Mammary epithelial cell (primary cell): ENCODE measurements at regions of chr4 and their contacts with region 1.

Region 1: DNA sequence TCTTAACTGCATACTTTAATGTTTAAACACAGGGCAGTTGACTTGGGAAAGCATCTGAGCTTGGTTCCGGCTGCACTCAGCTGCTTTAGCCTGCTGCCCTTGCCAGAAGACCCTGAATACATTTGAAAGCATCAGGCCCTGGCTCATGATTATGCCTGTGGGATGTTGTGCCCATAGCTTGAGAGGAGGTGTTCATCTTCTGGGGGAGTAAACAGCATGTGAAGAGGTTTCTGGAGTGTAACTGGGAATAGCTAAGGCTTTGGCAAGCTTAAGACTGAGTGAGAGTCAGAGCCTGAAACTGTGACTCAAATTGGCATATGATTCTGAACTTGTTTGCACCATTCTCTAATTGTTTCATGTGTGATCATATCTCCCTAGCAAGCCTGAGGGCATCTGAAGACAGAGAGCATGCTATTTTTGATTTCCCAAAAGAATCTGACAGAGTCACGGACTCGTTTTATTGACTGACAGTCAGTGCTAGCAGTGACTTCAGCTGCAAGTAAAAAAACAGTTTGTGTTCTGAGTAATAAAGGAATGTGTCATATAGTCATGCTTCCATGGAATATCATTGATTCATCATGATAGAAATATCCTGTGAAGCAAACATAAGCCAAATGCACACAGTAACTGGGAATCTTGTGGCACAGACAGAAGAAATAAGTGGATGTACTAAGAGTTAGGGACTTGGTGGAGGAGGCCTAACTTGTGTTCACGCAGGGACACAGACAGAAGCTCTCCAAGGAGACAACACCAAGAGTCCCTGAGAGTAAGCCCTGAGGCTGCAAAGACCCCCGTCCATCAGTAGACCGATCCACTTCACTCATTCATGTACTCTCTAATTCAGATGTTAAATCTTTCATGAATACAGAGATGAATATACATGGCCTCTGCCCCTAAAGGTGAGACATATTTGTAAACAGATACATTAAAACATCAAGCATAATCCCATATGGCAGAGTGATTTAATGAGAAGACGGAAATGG is 100.7 kb downstream of the SYNPO2 start:
- DNase-seq: peak; percentile 99
- H3K4me3 ChIP-seq: no peak overlapping the region
- H3K27ac ChIP-seq: peak overlapping the region; percentile 95
- H3K4me1 ChIP-seq: peaks cover 21% of the 10 kb centered on the region
- H3K27me3 ChIP-seq: no peaks in the 10 kb centered on the region
- CTCF ChIP-seq: no peak

Region 2: DNA sequence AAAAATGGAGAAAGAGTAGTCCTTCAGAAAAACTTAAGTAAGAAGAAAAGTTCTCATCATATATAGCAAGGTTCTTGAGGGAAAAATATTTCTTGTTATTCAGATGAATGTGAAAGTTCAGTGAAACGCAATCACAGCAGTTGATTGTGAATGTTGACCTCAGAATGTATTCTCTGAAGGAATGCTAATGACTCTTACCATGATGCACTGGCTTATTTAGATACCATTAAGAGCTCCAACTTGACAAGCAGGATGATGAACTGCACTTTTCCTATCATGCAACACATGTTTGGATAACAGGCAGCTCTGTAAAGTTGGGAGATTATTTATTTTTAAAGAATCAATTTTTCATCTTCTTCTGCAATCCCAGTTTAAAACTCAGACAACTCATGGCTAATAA is 30.8 kb after region 1 on chr4:
- CTCF ChIA-PET with region 1: no interaction called
- dilution Hi-C with region 1: loop called (anchors 5 kb)
- in situ Hi-C with region 1: no loop called
- intact Hi-C with region 1: loop called (anchors 1 kb)
- DNase-seq: no peak
- H3K4me3 ChIP-seq: no peak overlapping the region
- H3K27ac ChIP-seq: no peak overlapping the region
- H3K4me1 ChIP-seq: peaks cover 3% of the 10 kb centered on the region
- H3K27me3 ChIP-seq: no peaks in the 10 kb centered on the region
- CTCF ChIP-seq: no peak

Region 3: DNA sequence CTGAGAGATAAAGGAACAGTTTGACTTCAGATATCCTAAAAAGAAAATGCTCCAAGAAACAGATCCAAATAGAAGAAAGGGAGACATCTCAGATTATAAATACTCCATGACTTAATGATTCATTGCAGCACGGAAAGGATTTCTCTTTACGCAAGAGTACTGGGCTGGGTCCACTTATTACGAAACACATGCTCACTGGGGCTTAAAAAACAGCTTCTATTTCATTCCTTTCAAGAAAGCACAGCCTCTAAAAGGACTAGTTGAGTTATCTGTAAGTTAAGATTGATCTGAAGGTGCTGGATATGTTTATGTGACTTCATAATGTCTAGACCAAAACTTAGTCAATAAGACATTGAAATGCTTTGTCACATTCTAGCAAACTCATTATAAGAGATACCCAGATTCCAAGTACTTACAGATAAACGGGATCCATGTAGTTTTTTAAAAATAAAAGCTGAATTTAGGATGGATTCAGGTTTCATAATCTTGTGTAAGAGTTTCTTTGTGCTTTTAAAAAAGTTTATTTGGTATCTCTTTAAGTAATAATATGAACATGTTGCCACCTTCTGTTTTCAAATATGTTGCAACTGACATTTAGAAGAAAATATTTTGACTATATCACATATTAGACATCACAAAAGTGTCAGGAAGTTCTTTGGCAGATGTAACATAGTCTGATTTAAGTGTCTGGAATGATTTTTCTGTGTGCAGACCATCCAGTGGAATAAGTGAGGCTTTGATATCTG is 36.7 kb after region 1 on chr4:
- CTCF ChIA-PET with region 1: interaction called, 3 read pairs
- dilution Hi-C with region 1: loop called (anchors 5 kb)
- in situ Hi-C with region 1: no loop called
- intact Hi-C with region 1: loop called (anchors 1 kb)
- DNase-seq: peak; percentile 84
- H3K4me3 ChIP-seq: peak overlapping the region in 2 of 3 experiments; percentile 26 to 41
- H3K27ac ChIP-seq: peak overlapping the region; percentile 99
- H3K4me1 ChIP-seq: peaks cover 21% of the 10 kb centered on the region
- H3K27me3 ChIP-seq: no peaks in the 10 kb centered on the region
- CTCF ChIP-seq: no peak

Region 4: DNA sequence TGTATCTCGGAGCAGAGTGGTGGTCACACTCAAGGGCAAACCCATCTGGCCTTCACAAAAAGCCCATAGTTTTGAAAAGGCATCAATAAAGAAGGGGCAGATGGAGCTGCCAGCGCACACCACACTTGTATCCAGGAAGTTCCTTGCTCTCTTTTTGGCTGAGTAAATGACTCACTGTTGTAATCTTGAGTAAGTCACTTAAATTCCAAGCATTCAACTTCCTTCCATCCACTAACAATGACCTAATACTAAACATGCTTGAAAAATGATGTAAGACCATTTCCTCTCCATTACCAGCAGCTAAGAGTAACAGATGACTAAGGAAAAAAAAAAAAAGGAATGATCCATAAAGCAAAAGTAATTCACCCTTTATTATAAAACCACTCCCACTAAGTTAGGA is 113.9 kb after region 1 on chr4:
- CTCF ChIA-PET with region 1: no interaction called
- dilution Hi-C with region 1: no loop called
- in situ Hi-C with region 1: no loop called
- intact Hi-C with region 1: loop called (anchors 2 kb)
- DNase-seq: peak; percentile 96
- H3K4me3 ChIP-seq: no peak overlapping the region
- H3K27ac ChIP-seq: peak overlapping the region; percentile 91
- H3K4me1 ChIP-seq: peaks cover 34% of the 10 kb centered on the region
- H3K27me3 ChIP-seq: no peaks in the 10 kb centered on the region
- CTCF ChIP-seq: no peak

Region 5: DNA sequence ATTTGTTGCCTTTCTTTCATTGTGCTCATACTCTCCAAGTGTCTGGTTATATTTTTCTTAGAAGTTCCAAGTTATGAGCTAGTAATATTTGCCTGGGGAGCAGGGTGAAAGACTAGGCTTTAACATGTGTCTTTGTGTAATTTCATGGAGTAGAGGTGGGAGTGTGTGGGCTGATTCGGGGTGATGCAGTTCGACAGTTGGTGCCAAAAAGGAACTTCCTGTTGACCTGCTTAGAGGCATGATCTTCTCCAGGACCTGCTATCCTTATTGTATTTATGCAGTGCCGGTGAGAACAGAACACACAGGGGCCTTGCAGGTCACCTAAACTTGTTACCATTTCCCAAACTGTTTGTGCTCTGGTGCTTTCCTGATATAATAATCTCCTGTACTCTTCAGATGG is 244.4 kb after region 1 on chr4:
- CTCF ChIA-PET with region 1: no interaction called
- dilution Hi-C with region 1: no loop called
- in situ Hi-C with region 1: no loop called
- intact Hi-C with region 1: no loop called
- DNase-seq: no peak
- H3K4me3 ChIP-seq: no peak overlapping the region
- H3K27ac ChIP-seq: no peak overlapping the region
- H3K4me1 ChIP-seq: peaks cover 10% of the 10 kb centered on the region
- H3K27me3 ChIP-seq: no peaks in the 10 kb centered on the region
- CTCF ChIP-seq: no peak

Region 6: GRCh38 chr4:119300101-119300978 is 311.0 kb after region 1 on chr4:
- CTCF ChIA-PET with region 1: interaction called, 4 read pairs
- dilution Hi-C with region 1: no loop called
- in situ Hi-C with region 1: loop called in 1 of 2 experiments (anchors 5 kb)
- intact Hi-C with region 1: loop called (anchors 1 kb)
- DNase-seq: peak; percentile 98
- H3K4me3 ChIP-seq: peak overlapping the region; percentile 64 to 91 (median 84)
- H3K27ac ChIP-seq: peak overlapping the region; percentile 92
- H3K4me1 ChIP-seq: peaks cover 3% of the 10 kb centered on the region
- H3K27me3 ChIP-seq: no peaks in the 10 kb centered on the region
- CTCF ChIP-seq: peak in 1 of 2 donors; percentile 9